Activated CD8-positive, alpha-beta T cell treated with anti-CD3 and anti-CD28 coated beads for 36 hours (primary cell): ENCODE measurements at regions of chr17 and their contacts with region 1.

Region 1: GRCh38 chr17:40582328-40582901 is 17.1 kb upstream of the CCR7 start:
- DNase-seq: peak; percentile 84
- ATAC-seq: peak; percentile 49
- H3K4me3 Mint-ChIP-seq: peak overlapping the region; percentile 62
- H3K27ac Mint-ChIP-seq: peak overlapping the region; percentile 88
- H3K4me1 Mint-ChIP-seq: peaks cover 92% of the 10 kb centered on the region
- H3K27me3 Mint-ChIP-seq: no peaks in the 10 kb centered on the region
- CTCF ChIP-seq: no peak

Region 2: GRCh38 chr17:40564883-40565768 is 17.3 kb before region 1 on chr17 and contains the start of gene CCR7:
- CTCF ChIA-PET with region 1: interaction called, 22 read pairs
- POLR2A ChIA-PET with region 1: interaction called, 74 read pairs
- intact Hi-C with region 1: loop called (anchors 2 kb)
- DNase-seq: peak; percentile 93
- ATAC-seq: peak; percentile 65
- H3K4me3 Mint-ChIP-seq: peak within 1 kb of the TSS; percentile 96
- H3K27ac Mint-ChIP-seq: peak within 1 kb of the TSS; percentile 99
- H3K4me1 Mint-ChIP-seq: peaks cover 47% of the 10 kb centered on the region
- H3K27me3 Mint-ChIP-seq: no peaks in the 10 kb centered on the region
- CTCF ChIP-seq: peak; percentile 23
- total RNA-seq, gene CCR7: 297 to 302 TPM